ENCODE measurements at regions of chr11 and their contacts with region 1.

Region 1: GRCh38 chr11:129785383-129786111 is 30.1 kb upstream of the TMEM45B start:
- DNase-seq: peak in 2 of 9 experiments; percentile 6 to 15
- ATAC-seq: no peak
- H3K4me3 ChIP-seq: no peak overlapping the region
- H3K4me3 Mint-ChIP-seq: no peak overlapping the region
- H3K27ac ChIP-seq: no peak overlapping the region
- H3K27ac Mint-ChIP-seq: no peak overlapping the region
- H3K4me1 ChIP-seq: no peaks in the 10 kb centered on the region
- H3K4me1 Mint-ChIP-seq: peaks cover 6% of the 10 kb centered on the region
- H3K27me3 ChIP-seq: no peaks in the 10 kb centered on the region
- H3K27me3 Mint-ChIP-seq: no peaks in the 10 kb centered on the region
- CTCF ChIP-seq: peak; percentile 29

Region 2: DNA sequence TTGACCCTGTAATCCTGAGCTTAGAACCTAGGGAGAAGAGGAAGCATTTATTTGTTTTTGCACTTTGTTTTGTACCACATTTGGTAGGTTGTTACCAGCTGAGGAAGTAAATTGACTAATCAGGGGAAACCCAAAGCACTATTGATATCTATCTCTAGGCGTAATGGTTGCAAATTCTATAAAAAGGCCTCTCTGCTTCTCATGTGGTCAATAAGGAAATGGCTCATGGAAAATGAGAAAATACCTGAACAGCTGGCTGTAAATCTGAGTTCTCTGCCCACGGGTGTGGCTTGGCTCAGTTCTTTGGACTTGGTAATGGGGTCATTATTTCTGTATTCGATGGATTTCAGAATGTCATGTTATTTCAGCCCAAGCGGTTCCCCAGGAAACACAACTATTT is 367.5 kb before region 1 on chr11:
- CTCF ChIA-PET with region 1: no interaction called
- POLR2A ChIA-PET with region 1: no interaction called
- intact Hi-C with region 1: no loop called
- DNase-seq: no peak
- ATAC-seq: no peak
- H3K4me3 ChIP-seq: no peak overlapping the region
- H3K4me3 Mint-ChIP-seq: no peak overlapping the region
- H3K27ac ChIP-seq: no peak overlapping the region
- H3K27ac Mint-ChIP-seq: no peak overlapping the region
- H3K4me1 ChIP-seq: no peaks in the 10 kb centered on the region
- H3K4me1 Mint-ChIP-seq: no peaks in the 10 kb centered on the region
- H3K27me3 ChIP-seq: no peaks in the 10 kb centered on the region
- H3K27me3 Mint-ChIP-seq: no peaks in the 10 kb centered on the region
- CTCF ChIP-seq: no peak

Region 3: DNA sequence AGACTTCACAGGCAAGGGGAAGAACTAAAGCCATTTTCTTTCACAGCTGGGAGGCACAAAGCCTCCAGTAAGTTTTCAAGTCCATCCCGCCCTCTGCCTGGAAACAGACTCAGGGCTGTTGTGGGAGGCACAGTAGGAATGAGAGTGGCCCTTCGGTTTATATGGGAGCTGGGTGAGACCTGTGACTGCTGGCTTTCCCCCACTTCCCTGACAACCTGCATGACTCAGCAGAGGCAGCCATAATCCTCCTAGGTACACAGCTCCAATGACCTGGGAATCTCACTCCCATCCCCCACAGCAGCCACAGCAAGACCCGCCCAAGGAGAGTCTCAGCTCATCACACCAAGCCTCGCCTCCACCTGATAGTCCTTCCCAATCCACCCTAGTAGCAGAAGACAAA is 18.0 kb after region 1 on chr11:
- CTCF ChIA-PET with region 1: no interaction called
- POLR2A ChIA-PET with region 1: no interaction called
- intact Hi-C with region 1: no loop called
- DNase-seq: no peak
- ATAC-seq: no peak
- H3K4me3 ChIP-seq: no peak overlapping the region
- H3K4me3 Mint-ChIP-seq: peak overlapping the region; percentile 53
- H3K27ac ChIP-seq: no peak overlapping the region
- H3K27ac Mint-ChIP-seq: peak overlapping the region; percentile 52
- H3K4me1 ChIP-seq: peaks cover 19% of the 10 kb centered on the region
- H3K4me1 Mint-ChIP-seq: peaks cover 30% of the 10 kb centered on the region
- H3K27me3 ChIP-seq: no peaks in the 10 kb centered on the region
- H3K27me3 Mint-ChIP-seq: peaks cover 17% of the 10 kb centered on the region
- CTCF ChIP-seq: no peak

Region 4: DNA sequence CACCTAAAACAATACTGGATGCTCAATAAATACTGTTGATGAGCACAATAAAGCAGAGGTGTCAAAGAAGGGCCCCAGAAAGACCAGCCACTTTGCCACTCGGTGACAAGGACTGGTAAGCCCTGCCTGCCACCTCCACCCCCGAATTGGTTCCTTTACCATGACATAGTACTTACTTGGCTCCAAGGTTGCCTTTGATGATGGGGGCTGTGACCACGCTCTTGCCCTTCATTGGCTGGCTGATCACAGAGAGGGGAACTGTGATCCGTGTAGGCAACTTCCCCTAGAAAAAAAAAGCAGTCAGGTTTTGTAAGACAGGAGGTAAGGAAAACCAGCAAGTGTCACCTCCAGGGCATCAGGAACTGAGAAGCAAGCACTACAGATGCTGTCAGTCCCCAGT is 80.2 kb after region 1 on chr11:
- CTCF ChIA-PET with region 1: no interaction called
- POLR2A ChIA-PET with region 1: no interaction called
- intact Hi-C with region 1: loop called in 1 of 2 experiments (anchors 5 kb)
- DNase-seq: peak in 2 of 9 experiments; percentile 14 to 32
- ATAC-seq: peak; percentile 50
- H3K4me3 ChIP-seq: no peak overlapping the region
- H3K4me3 Mint-ChIP-seq: no peak overlapping the region
- H3K27ac ChIP-seq: no peak overlapping the region
- H3K27ac Mint-ChIP-seq: peak overlapping the region; percentile 75
- H3K4me1 ChIP-seq: peaks cover 12% of the 10 kb centered on the region
- H3K4me1 Mint-ChIP-seq: peaks cover 31% of the 10 kb centered on the region
- H3K27me3 ChIP-seq: no peaks in the 10 kb centered on the region
- H3K27me3 Mint-ChIP-seq: no peaks in the 10 kb centered on the region
- CTCF ChIP-seq: no peak

Region 5: GRCh38 chr11:129881570-129882170 is 96.1 kb after region 1 on chr11:
- CTCF ChIA-PET with region 1: interaction called, 5 read pairs
- POLR2A ChIA-PET with region 1: no interaction called
- intact Hi-C with region 1: loop called in 1 of 2 experiments (anchors 1 kb)
- DNase-seq: peak; percentile 13 to 64 (median 42)
- ATAC-seq: peak; percentile 82
- H3K4me3 ChIP-seq: no peak overlapping the region
- H3K4me3 Mint-ChIP-seq: no peak overlapping the region
- H3K27ac ChIP-seq: no peak overlapping the region
- H3K27ac Mint-ChIP-seq: no peak overlapping the region
- H3K4me1 ChIP-seq: no peaks in the 10 kb centered on the region
- H3K4me1 Mint-ChIP-seq: no peaks in the 10 kb centered on the region
- H3K27me3 ChIP-seq: no peaks in the 10 kb centered on the region
- H3K27me3 Mint-ChIP-seq: no peaks in the 10 kb centered on the region
- CTCF ChIP-seq: peak; percentile 60

Region 6: DNA sequence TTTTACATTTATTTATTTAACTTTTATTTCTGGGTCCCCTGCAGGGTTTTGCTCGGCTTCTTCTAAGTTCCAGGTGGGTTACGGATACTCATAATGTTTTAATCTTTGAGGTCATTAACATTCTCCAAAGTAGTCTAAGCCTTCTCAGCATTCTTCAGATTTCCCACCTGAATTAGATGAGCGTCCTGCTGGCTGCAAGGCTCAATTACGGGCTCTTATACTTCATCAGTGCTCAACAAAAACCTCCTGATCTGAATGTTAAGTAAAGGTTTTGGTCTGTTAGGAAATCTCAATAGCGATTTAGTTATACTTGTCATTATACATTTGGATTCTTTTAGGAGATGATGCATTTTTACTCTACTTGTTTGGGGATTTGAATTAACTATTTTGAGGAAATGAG is 137.1 kb after region 1 on chr11:
- CTCF ChIA-PET with region 1: interaction called, 11 read pairs
- POLR2A ChIA-PET with region 1: no interaction called
- intact Hi-C with region 1: loop called in 1 of 2 experiments (anchors 1 kb)
- DNase-seq: no peak
- ATAC-seq: no peak
- H3K4me3 ChIP-seq: no peak overlapping the region
- H3K4me3 Mint-ChIP-seq: no peak overlapping the region
- H3K27ac ChIP-seq: no peak overlapping the region
- H3K27ac Mint-ChIP-seq: no peak overlapping the region
- H3K4me1 ChIP-seq: peaks cover 5% of the 10 kb centered on the region
- H3K4me1 Mint-ChIP-seq: peaks cover 6% of the 10 kb centered on the region
- H3K27me3 ChIP-seq: peaks cover 0 to 3% of the 10 kb centered on the region in 2 experiments
- H3K27me3 Mint-ChIP-seq: no peaks in the 10 kb centered on the region
- CTCF ChIP-seq: no peak